Ascending aorta (tissue), 2 donors: ENCODE measurements at regions of chr11 and their contacts with region 1.

Region 1: DNA sequence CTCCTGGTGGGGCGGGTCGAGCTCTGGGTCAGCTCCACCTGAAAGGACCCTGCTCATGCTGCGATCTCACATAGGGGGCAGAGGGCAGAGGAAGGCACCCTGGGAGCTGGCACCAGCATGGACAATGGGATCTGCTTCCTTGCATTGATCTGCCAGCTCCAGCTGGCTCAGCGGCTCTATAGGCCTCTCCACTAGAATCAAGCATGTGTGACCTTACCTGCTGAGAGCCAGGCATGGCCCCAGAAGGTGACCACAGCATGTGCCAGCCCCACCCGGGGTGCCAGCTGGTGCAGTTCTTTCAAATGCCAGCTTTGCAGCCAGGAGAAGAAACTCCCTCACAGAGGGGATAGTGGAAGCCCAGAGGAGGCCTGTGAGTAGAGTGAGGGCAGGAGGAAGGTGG is 22.0 kb upstream of the KLHL35 start:
- DNase-seq: no peak
- H3K4me3 ChIP-seq: no peak overlapping the region
- H3K27ac ChIP-seq: no peak overlapping the region
- H3K4me1 ChIP-seq: peaks cover 0 to 5% of the 10 kb centered on the region in 2 donors
- H3K27me3 ChIP-seq: no peaks in the 10 kb centered on the region
- CTCF ChIP-seq: no peak

Region 2: GRCh38 chr11:75087319-75088305 is 367.4 kb before region 1 on chr11:
- intact Hi-C with region 1: no loop called
- DNase-seq: no peak
- H3K4me3 ChIP-seq: no peak overlapping the region
- H3K27ac ChIP-seq: no peak overlapping the region
- H3K4me1 ChIP-seq: no peaks in the 10 kb centered on the region
- H3K27me3 ChIP-seq: no peaks in the 10 kb centered on the region
- CTCF ChIP-seq: no peak

Region 3: DNA sequence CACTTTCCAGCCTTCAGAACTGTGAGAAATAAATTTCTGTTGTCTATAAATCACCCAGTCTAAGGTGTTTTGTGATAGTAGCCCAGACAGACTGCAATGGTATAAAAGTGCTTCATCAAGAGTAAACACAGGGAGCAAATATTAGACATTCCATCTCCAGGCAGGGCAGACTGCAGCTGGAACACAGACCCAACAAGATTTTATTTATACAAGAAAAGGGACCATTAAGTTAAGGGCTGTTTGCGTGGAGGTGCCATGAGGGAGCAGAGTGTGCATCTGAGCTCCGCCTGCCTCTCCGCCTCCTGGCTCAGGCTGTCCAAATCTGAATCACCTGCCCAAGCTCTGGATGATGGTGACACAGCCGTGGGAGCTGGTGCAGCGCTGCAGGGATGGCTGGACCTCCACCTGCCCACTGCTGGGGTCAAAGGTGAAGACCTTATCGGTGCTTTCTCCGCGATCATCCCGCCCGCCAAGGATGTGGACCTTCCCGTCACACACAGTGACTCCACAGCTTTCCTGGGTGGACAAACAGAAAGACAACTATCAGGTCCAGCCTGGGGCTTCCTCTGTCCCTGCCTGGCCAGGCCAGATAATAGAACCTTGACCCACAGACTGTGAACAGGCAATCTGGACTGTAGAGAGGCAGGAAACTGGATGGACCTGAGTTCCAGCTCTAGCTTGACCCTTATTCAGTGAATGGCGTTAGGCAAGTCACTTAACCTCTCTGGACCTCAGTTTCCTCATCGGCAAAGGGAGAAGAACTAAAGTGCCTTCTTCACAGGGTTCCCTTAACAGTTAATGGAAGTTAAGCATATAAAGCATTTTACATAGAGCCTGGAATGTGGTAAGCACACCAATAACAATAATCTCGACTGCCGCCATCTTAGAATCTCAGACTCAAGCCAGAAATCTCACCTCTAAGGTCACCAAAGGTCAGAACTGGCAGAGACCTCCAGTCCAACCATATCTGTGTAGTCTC is 32.4 kb before region 1 on chr11:
- intact Hi-C with region 1: no loop called
- DNase-seq: no peak
- H3K4me3 ChIP-seq: no peak overlapping the region
- H3K27ac ChIP-seq: peak overlapping the region; percentile 61 to 91
- H3K4me1 ChIP-seq: peaks cover 10 to 21% of the 10 kb centered on the region in 2 donors
- H3K27me3 ChIP-seq: no peaks in the 10 kb centered on the region
- CTCF ChIP-seq: no peak

Region 4: GRCh38 chr11:75492181-75492820 is 37.3 kb after region 1 on chr11:
- intact Hi-C with region 1: loop called (anchors 5 kb)
- DNase-seq: no peak
- H3K4me3 ChIP-seq: no peak overlapping the region
- H3K27ac ChIP-seq: no peak overlapping the region
- H3K4me1 ChIP-seq: no peaks in the 10 kb centered on the region
- H3K27me3 ChIP-seq: no peaks in the 10 kb centered on the region
- CTCF ChIP-seq: no peak